IMR-90 (cell line): ENCODE measurements at regions of chr2 and their contacts with region 1.

Region 1: DNA sequence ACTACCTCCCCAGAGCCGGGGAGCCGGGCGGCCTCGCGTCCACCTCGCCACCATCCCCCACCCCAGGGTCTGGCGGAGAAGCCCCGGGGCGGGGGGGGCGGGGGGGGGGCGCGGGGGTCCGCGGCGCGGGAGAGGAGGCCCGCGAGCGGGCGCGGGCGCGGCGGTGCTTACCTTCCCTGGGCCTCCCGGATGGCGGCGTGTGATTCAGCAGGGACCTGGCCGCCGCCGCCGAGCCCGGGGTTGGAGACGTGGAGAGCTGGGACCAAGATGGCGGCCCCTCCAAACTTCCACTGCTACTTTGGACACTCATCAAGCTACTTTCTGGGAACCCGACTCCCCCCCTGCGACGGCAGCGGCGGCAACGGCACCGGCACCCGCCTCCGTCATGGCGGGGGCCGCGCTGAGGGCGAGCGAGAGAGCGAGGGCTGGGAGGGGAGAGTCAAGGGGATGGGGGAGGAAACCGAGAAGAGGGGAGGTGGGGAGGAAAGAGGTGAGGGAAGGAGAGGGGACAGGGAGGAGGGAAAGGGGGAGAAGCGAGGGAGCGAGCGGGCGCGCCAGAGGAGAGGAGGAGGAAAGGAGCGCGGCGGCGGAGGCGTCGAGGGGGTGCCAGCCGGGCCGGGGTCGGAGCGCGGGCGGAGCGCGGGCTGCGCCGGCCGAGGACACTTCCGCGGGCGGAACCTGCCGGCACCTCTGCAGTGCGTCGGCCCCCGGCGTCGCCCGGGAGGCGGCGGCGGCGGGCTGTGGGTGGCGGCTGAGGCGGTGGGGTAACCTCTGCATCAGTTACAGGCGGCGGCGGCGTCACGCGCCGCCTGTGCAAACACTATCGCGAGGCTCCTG is at the start of gene TLK1:
- DNase-seq: peak; percentile 62
- ATAC-seq: peak; percentile 71
- H3K4me3 ChIP-seq: peak within 1 kb of the TSS; percentile 88
- H3K27ac ChIP-seq: peak within 1 kb of the TSS; percentile 99
- H3K4me1 ChIP-seq: no peaks in the 10 kb centered on the region
- H3K27me3 ChIP-seq: no peaks in the 10 kb centered on the region; the same call in 1 of the 2 replicates
- CTCF ChIP-seq: peak; percentile 24; the same call in 1 of the 2 replicates
- POLR2A ChIP-seq: peak; percentile 65; the same call in 1 of the 2 replicates
- RAD21 ChIP-seq: no peak
- total RNA-seq, gene TLK1: 12.5 TPM in 2 replicates

Region 2: DNA sequence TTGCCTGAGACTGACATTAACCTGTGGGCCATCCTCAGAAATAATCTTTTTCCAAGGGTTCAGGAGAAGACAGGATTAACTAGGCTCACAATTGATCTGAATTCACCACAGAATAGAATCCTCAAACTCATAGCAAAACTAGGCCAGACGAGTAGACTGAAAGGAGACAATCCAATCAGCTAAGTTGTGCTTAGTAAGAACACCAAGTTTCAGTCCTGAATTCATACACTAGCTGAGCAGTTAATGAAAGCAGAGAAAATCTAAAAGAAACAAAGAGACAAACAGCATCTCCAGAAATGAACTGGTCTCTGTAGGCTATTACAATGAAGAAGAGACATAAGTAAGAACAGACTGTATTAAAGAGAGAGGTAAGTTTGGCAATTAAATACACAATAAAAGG is 141.8 kb before region 1 on chr2:
- CTCF ChIA-PET with region 1: no interaction called
- POLR2A ChIA-PET with region 1: no interaction called
- dilution Hi-C with region 1: no loop called
- in situ Hi-C with region 1: no loop called
- intact Hi-C with region 1: loop called (anchors 1 kb)
- DNase-seq: no peak
- ATAC-seq: no peak
- H3K4me3 ChIP-seq: no peak overlapping the region
- H3K27ac ChIP-seq: no peak overlapping the region
- H3K4me1 ChIP-seq: peaks cover 3% of the 10 kb centered on the region
- H3K27me3 ChIP-seq: no peaks in the 10 kb centered on the region
- CTCF ChIP-seq: no peak
- POLR2A ChIP-seq: no peak
- RAD21 ChIP-seq: no peak

Region 3: DNA sequence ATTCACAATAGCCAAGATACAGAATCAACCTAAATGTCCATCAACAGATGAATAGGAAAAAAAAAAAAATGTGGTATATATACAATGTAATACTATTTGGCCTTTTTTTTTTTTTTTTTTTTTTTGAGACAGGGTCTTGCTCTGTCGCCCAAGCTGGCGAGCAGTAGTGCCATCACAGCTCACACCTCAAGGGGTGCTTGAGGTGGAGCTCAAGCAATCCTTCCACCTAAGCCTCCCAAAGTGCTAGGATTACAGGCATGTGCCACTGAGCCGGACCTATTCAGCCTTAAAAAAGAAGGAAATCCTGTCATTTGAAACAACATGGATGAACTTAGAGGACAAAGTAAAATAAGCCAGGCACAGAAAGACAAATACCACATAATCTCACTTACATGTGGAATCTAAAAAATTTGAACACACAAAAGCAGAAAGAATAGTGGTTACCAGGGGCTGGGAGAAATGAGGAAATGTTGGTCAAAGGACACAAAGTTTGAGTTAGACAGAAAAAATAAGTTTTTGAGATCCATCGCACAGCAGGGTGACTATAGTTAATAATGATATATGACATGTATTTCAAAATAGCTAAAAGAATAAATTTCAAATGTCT is 25.6 kb before region 1 on chr2:
- CTCF ChIA-PET with region 1: no interaction called
- POLR2A ChIA-PET with region 1: no interaction called
- dilution Hi-C with region 1: no loop called
- in situ Hi-C with region 1: no loop called
- intact Hi-C with region 1: no loop called
- DNase-seq: no peak
- ATAC-seq: no peak
- H3K4me3 ChIP-seq: no peak overlapping the region
- H3K27ac ChIP-seq: no peak overlapping the region
- H3K4me1 ChIP-seq: peaks cover 2% of the 10 kb centered on the region; the same call in 1 of the 2 replicates
- H3K27me3 ChIP-seq: no peaks in the 10 kb centered on the region
- CTCF ChIP-seq: no peak
- POLR2A ChIP-seq: no peak
- RAD21 ChIP-seq: no peak

Region 4: GRCh38 chr2:171287611-171288010 is 127.3 kb after region 1 on chr2:
- CTCF ChIA-PET with region 1: no interaction called
- POLR2A ChIA-PET with region 1: interaction called, 13 read pairs
- dilution Hi-C with region 1: no loop called
- in situ Hi-C with region 1: no loop called
- intact Hi-C with region 1: loop called (anchors 5 kb)
- DNase-seq: peak; percentile 40
- ATAC-seq: peak; percentile 30
- H3K4me3 ChIP-seq: no peak overlapping the region
- H3K27ac ChIP-seq: peak overlapping the region; percentile 81; the same call in 1 of the 2 replicates
- H3K4me1 ChIP-seq: peaks cover 14% of the 10 kb centered on the region
- H3K27me3 ChIP-seq: no peaks in the 10 kb centered on the region
- CTCF ChIP-seq: no peak
- POLR2A ChIP-seq: no peak
- RAD21 ChIP-seq: no peak

Region 5: DNA sequence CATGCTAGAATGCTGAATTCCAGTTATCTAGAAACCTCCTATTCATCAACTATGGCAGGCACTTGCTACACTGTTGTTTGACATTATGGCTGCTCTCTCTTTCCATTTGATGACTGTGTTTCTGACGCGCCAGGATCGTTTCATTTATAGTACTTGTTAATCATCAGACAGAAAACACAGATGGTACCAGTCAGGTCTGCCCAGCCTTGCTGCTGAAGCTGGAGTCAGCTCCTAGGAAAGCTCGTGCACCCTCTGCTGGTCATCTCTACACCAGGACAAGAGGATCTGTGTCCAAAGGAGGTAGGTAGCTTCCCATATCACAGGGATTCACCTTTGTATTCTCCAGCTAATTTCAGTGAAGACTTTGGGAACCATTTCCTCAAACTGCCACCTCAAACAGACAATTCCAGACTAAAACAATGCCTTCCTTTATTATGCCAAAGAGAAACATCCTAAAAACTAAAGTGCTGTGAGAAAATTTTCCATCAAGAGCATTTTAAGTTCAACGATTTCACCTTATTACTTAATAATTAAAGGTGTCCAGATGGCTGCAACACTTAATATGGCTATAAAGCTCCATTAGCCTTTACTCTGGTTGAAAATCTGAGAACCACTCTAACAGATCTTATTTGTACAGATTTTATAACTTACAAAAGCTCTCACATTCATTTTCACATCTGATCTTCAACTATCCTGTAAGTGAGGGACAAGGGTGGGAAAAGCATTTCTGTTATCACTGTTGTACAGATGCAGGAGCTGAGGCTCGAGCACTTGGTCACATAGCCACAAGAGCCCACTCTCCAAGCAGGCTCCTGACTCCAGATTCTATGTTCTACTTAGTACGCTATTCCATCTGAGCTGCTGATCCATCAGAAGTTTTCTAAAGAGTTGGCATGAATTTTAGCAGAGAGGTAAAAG is 255.9 kb after region 1 on chr2:
- CTCF ChIA-PET with region 1: interaction called, 10 read pairs
- POLR2A ChIA-PET with region 1: no interaction called
- dilution Hi-C with region 1: no loop called
- in situ Hi-C with region 1: loop called (anchors 10 kb)
- intact Hi-C with region 1: loop called (anchors 1 kb)
- DNase-seq: peak; percentile 98
- ATAC-seq: peak; percentile 94
- H3K4me3 ChIP-seq: no peak overlapping the region; the same call in 1 of the 2 replicates
- H3K27ac ChIP-seq: no peak overlapping the region
- H3K4me1 ChIP-seq: peaks cover 7% of the 10 kb centered on the region
- H3K27me3 ChIP-seq: no peaks in the 10 kb centered on the region
- CTCF ChIP-seq: peak; percentile 91
- POLR2A ChIP-seq: peak; percentile 54; the same call in 1 of the 2 replicates
- RAD21 ChIP-seq: peak; percentile 98

Region 6: GRCh38 chr2:171529914-171530313 is 369.6 kb after region 1 on chr2:
- CTCF ChIA-PET with region 1: no interaction called
- POLR2A ChIA-PET with region 1: no interaction called
- dilution Hi-C with region 1: no loop called
- in situ Hi-C with region 1: no loop called
- intact Hi-C with region 1: loop called (anchors 10 kb)
- DNase-seq: no peak
- ATAC-seq: no peak
- H3K4me3 ChIP-seq: no peak overlapping the region
- H3K27ac ChIP-seq: no peak overlapping the region
- H3K4me1 ChIP-seq: peaks cover 4% of the 10 kb centered on the region; the same call in 1 of the 2 replicates
- H3K27me3 ChIP-seq: no peaks in the 10 kb centered on the region
- CTCF ChIP-seq: peak; percentile 39
- POLR2A ChIP-seq: no peak
- RAD21 ChIP-seq: no peak